ENCODE measurements at regions of chr18 and their contacts with region 1.

Region 1: DNA sequence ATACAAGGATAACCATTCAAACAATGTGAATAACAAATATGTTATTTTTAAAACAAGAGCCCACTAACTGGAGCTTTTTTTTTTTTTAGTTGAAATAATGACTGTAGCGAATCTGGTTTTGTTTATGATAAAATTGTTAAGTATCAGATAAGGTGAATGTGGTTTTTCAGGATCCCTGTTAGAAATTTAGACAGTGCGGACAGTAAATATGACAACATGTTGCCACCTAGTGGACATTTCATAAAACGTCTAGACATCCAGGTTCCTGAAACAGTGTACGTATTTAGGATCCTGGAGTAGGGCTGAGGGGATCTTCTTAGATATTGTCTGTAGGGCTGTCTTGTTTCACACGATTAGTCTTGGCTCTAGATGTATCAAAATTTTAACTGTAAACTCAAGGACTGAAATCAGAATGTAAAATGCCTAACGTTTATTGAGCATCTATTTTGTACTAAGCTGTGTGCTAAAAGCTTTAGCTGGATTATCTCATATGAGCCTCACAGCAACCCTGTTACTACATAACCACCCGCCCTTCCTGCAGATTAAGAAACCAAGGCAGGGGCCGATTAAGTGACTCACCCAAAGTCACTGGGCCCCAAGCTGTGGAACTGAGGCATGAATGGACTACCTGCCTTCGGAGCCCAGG is 23.9 kb upstream of the CCDC68 start:
- DNase-seq: no peak
- H3K4me3 ChIP-seq: no peak overlapping the region
- H3K27ac ChIP-seq: no peak overlapping the region
- H3K4me1 ChIP-seq: no peaks in the 10 kb centered on the region
- H3K27me3 ChIP-seq: no peaks in the 10 kb centered on the region
- CTCF ChIP-seq: peak; percentile 14 to 77 (median 62)
- POLR2A ChIP-seq: no peak

Region 2: DNA sequence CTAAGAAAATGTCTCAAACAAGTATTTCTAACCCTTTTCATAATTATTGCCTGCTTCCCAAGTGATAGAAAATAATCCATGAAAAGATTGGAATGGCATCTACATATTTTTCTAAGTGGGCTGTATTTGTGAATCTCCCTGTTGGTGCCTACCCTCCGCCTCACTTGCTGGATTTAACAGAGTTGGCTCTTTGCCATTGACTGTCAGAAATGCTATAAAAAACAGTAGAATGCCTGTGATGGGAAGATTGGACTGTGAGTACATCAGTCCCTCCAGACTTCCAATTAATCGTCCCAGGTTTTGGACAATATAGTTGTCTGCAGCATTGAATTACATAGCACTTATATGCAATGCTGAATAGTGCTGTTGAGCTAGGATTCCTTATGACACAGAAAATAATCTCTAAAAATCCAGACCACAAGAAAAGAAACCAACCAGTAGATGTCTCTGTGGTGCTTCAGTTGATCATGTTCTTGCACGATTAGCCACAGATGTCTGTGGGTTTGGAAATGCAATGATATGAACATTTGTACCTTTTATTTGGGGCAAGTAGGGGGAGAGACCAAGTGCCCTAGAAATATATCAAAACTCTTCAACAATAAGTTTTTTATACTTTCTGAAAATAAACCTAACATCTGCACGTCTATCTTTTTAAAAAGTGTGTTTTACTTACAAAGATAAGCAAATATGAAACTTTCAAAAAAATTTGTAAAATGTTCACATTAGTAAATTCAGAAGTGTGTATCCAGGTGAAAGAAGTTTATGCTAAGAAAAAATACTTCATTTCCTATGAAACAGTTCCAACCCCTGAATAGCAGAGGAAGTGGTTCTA is 303.6 kb before region 1 on chr18:
- intact Hi-C with region 1: loop called (anchors 5 kb)
- DNase-seq: no peak
- H3K4me3 ChIP-seq: no peak overlapping the region
- H3K27ac ChIP-seq: no peak overlapping the region
- H3K4me1 ChIP-seq: no peaks in the 10 kb centered on the region
- H3K27me3 ChIP-seq: no peaks in the 10 kb centered on the region
- CTCF ChIP-seq: peak; percentile 17 to 68 (median 42)
- POLR2A ChIP-seq: no peak

Region 3: DNA sequence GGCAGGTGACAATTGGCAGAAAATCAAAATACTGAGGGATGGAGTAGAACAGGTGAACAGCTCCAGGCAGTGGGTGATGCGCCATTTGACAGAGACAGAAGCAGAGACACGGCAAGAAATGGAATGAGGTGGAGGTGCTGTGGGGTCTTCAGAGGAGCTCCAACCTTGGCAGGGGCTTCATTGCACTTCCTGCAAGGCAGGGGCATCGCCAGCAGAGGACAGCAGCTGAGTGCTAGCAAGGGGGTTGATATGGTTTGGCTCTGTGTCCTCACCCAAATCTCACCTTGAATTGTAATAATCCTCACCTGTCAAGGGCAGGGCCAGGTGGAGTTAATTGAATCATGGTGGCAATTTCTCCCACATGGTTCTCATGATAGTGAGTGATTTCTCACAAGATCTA is 66.7 kb before region 1 on chr18:
- intact Hi-C with region 1: no loop called
- DNase-seq: no peak
- H3K4me3 ChIP-seq: no peak overlapping the region
- H3K27ac ChIP-seq: no peak overlapping the region
- H3K4me1 ChIP-seq: no peaks in the 10 kb centered on the region
- H3K27me3 ChIP-seq: no peaks in the 10 kb centered on the region
- CTCF ChIP-seq: no peak
- POLR2A ChIP-seq: no peak